H1 (cell line): ENCODE measurements at regions of chr17 and their contacts with region 1.

Region 1: DNA sequence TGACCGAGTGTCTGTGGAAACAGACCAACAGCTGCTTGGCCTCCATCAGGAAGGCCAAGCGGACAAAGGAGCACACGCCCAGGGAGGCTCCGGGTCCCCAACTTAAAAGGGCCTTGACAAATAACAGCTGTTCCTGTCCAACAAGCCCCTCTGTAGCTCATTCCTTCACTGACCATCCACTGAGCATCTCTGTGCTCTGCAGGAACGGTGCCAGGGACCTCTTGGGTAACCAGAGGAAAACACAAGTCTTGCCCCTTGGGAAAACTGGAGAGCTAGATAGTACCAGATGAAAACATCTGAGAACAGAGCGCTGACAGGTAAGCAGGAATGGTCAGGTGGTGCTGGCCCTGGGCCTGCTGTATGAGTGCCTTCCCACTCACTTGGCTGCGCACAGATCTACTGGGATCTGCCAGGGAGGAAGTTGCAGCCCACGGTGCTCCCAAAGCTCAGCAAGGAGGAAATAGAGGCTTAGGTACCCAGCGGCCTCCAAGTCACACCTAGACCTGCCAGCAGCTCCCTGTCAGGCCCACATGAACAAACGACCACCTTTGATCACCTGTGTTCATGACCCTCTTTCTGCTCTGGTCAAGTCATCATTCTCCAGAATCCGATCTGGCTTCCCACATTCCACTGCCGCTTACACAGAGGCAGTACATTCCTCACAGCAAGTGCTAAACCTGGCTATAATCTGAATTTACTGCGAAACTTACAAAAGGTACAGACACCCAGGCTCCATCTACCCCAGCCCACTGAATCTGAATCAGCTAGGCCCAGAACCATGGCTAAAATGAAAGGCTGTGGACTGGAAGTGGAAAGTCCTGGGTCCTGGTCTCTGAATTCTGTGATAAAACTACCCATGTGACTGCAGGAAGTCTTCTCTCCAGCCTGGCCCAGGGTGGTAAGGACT is 12.5 kb downstream of the DCAKD start:
- DNase-seq: no peak
- H3K4me3 ChIP-seq: no peak overlapping the region
- H3K27ac ChIP-seq: no peak overlapping the region
- H3K4me1 ChIP-seq: peaks cover 4 to 11% (median 7%) of the 10 kb centered on the region in 4 experiments
- H3K27me3 ChIP-seq: no peaks in the 10 kb centered on the region
- CTCF ChIP-seq: no peak
- EP300 ChIP-seq: no peak
- POLR2A ChIP-seq: no peak
- RAD21 ChIP-seq: no peak

Region 2: GRCh38 chr17:45051060-45051719 is 12.2 kb after region 1 on chr17 and contains the start of gene DCAKD:
- CTCF ChIA-PET with region 1: interaction called, 6 read pairs
- POLR2A ChIA-PET with region 1: interaction called, 25 read pairs
- DNase-seq: peak; percentile 79 to 89
- H3K4me3 ChIP-seq: peak within 1 kb of the TSS; percentile 75 to 84 (median 79)
- H3K27ac ChIP-seq: peak within 1 kb of the TSS; percentile 79
- H3K4me1 ChIP-seq: peaks cover 0 to 4% (median 2%) of the 10 kb centered on the region in 4 experiments; a peak in 3 of 7 replicates
- H3K27me3 ChIP-seq: no peaks in the 10 kb centered on the region; a peak in 1 of 7 replicates
- CTCF ChIP-seq: 0 out of 4 replicates have a peak, but pooled peaks of 1 of the 3 experiments have one; percentile 6
- EP300 ChIP-seq: no peak
- POLR2A ChIP-seq: peak in 1 of 2 experiments; percentile 67; a peak in 1 of 3 replicates
- RAD21 ChIP-seq: no peak; a peak in 1 of 4 replicates
- total RNA-seq, gene DCAKD: 33.7 and 35.6 TPM in 2 replicates

Region 3: DNA sequence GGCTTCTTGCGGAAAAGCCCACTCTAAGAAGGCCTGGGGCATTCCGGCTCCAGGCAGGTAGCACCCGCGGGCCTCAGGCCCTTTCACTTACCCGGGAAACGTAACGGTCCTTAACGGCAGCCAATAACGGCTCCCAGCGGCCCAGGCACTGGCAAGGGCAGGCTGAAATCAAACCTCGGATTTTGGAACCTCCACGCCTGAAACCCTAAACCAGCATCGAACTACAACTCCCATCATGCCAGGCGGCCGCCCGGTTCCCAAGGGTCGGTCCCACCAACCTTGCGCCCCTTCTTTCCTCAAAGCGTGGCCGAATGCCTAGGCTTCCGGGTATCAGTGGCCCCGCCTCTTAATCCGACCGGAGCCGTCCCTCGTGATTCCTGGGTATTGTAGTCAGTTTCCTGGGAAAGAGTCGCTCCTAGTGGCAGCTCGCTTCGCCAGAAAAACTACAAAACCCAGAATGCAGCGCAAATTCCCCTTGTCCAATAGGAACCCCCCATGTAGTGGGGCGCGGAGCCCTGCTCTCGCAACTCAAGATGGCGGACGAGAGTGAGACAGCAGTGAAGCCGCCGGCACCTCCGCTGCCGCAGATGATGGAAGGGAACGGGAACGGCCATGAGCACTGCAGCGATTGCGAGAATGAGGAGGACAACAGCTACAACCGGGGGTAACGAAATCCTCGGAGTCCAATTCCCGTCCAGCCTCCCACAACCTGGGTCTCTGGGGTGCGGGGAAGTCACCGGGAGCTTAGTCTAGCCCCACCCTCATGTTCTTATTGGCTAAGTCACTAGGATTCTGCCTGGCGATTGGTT is 22.0 kb after region 1 on chr17 and contains the start of gene NMT1:
- CTCF ChIA-PET with region 1: interaction called, 3 read pairs
- POLR2A ChIA-PET with region 1: interaction called, 13 read pairs
- DNase-seq: peak; percentile 94 to 96
- H3K4me3 ChIP-seq: peak within 1 kb of the TSS; percentile 80 to 100 (median 96)
- H3K27ac ChIP-seq: peak within 1 kb of the TSS; percentile 98
- H3K4me1 ChIP-seq: no peaks in the 10 kb centered on the region; a peak in 2 of 7 replicates
- H3K27me3 ChIP-seq: no peaks in the 10 kb centered on the region
- CTCF ChIP-seq: peak in 1 of 3 experiments; percentile 2; a peak in 1 of 4 replicates
- EP300 ChIP-seq: no peak
- POLR2A ChIP-seq: peak; percentile 90 to 97
- RAD21 ChIP-seq: no peak
- total RNA-seq, gene NMT1: 149 and 152 TPM in 2 replicates

Region 4: DNA sequence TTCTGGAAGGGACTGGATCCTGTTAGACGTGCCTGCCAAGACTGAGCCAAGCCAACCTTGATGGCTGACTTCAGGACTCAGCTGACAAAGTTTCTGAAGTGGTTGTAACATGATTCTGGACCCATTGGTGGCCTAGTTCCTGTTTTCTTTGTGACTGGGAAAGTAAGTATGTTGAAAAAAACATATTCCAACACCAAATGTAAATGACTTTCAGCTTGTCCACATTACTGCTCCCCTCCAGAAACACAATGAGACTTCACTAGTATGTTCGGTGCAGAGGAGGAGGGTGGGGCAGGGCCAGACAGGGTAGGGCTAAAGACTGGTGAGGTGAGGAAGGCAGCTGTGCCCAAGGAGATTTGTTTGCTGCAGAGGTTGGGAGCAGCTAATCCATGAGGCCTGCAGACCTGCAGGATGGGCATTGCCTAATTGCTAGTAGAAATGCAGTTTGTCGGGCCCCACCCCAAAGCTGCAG is 48.6 kb after region 1 on chr17:
- CTCF ChIA-PET with region 1: no interaction called
- POLR2A ChIA-PET with region 1: no interaction called
- DNase-seq: no peak
- H3K4me3 ChIP-seq: no peak overlapping the region
- H3K27ac ChIP-seq: no peak overlapping the region
- H3K4me1 ChIP-seq: peaks cover 0 to 7% (median 0%) of the 10 kb centered on the region in 4 experiments; a peak in 3 of 7 replicates
- H3K27me3 ChIP-seq: no peaks in the 10 kb centered on the region
- CTCF ChIP-seq: no peak
- EP300 ChIP-seq: no peak
- POLR2A ChIP-seq: no peak
- RAD21 ChIP-seq: no peak

Region 5: DNA sequence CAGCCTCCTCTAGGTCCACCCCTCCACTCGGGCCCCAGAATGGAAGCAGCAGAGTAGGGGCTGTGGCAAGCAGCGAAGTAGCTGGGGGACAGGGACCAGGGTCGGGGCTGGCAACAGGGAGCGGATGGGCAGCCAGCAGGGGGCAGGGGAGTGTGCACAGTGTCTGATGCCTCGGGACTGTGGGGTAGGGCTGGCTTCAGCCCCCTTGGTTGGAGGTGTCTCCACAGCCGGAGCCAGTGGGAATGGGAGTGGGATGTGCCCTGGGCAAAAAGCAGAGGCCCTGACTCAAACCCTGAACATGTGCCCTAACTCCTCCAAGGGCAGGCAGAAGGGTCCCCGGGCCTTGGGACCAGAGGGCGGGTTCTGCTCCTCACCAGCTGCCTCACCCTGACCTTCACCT is 412.2 kb after region 1 on chr17:
- CTCF ChIA-PET with region 1: no interaction called
- POLR2A ChIA-PET with region 1: no interaction called
- DNase-seq: no peak
- H3K4me3 ChIP-seq: no peak overlapping the region
- H3K27ac ChIP-seq: no peak overlapping the region
- H3K4me1 ChIP-seq: no peaks in the 10 kb centered on the region
- H3K27me3 ChIP-seq: no peaks in the 10 kb centered on the region
- CTCF ChIP-seq: peak; percentile 16 to 59 (median 25); a peak in 3 of 4 replicates
- EP300 ChIP-seq: no peak
- POLR2A ChIP-seq: no peak
- RAD21 ChIP-seq: no peak; a peak in 1 of 4 replicates